ENCODE measurements at regions of chr4 and their contacts with region 1.

Region 1: GRCh38 chr4:8917868-8918783 is 46.5 kb upstream of the HMX1 start:
- DNase-seq: peak; percentile 35 to 58
- ATAC-seq: peak in 7 of 8 donors; percentile 60 to 81 (median 71)
- H3K4me3 ChIP-seq: no peak overlapping the region
- H3K27ac ChIP-seq: no peak overlapping the region
- H3K4me1 ChIP-seq: no peaks in the 10 kb centered on the region
- H3K27me3 ChIP-seq: peaks cover 0 to 69% (median 17%) of the 10 kb centered on the region in 7 donors
- CTCF ChIP-seq: peak; percentile 40 to 91 (median 83)

Region 2: DNA sequence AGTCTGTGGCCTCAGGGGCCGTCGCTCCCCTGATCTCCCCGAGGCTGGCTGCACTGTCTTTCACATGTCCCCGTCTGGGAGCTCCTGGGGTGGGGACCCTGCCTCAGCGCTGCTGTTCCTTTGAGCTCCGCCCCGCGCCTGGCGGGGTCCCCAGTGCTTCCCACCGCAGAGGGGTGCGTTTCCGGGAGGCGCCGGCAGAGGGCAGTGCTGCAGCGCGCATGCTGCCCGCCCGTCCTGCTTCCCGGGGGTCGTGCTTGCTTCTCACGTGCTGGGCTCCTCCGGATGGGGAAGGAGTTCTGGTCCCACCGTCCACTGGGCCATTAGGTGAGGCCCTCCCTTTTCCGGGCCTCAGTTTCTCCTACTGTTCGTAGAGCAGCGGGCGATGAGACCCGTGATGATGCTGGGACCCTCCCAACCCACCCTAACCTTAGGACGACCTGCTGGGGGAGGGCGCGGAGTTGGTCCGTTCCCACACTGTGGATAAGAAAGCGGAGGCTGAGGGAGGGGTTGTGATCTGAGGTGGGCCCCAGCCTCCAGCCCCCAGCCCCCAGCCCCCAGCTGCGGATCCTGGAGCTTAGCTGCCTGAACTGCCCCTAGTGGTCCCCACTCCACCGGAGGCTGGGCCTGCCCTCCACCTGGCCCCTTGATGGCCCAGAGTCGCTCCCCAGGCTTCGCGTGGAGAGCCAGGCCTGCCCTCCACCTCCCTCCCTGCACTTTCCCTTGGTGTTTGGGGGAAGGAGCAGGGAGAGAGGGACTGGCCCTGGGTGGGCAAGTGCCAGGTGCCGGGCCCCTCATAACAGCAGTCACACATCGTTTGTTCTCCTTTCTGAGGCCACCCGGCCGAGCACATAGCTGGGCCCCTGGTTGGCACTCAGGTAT is 310.3 kb before region 1 on chr4:
- intact Hi-C with region 1: loop called (anchors 5 to 10 kb)
- DNase-seq: peak in 1 of 2 donors; percentile 54
- ATAC-seq: peak in 4 of 8 donors; percentile 4 to 48 (median 31)
- H3K4me3 ChIP-seq: no peak overlapping the region
- H3K27ac ChIP-seq: no peak overlapping the region
- H3K4me1 ChIP-seq: peaks cover 0 to 39% (median 15%) of the 10 kb centered on the region in 9 donors
- H3K27me3 ChIP-seq: peaks cover 0 to 47% (median 20%) of the 10 kb centered on the region in 7 donors
- CTCF ChIP-seq: peak; percentile 94 to 99 (median 98)

Region 3: GRCh38 chr4:8615921-8616785 is 302.0 kb before region 1 on chr4:
- intact Hi-C with region 1: loop called in 1 of 10 experiments (anchors 10 kb)
- DNase-seq: peak in 1 of 2 donors; percentile 1
- ATAC-seq: no peak
- H3K4me3 ChIP-seq: no peak overlapping the region
- H3K27ac ChIP-seq: no peak overlapping the region
- H3K4me1 ChIP-seq: peaks cover 0 to 23% (median 5%) of the 10 kb centered on the region in 9 donors
- H3K27me3 ChIP-seq: peaks cover 0 to 26% (median 3%) of the 10 kb centered on the region in 7 donors
- CTCF ChIP-seq: no peak

Measured in heart right ventricle (tissue), 16 donors.